ENCODE measurements at regions of chrX and their contacts with region 1.

Region 1: GRCh38 chrX:150772150-150772970 is 79.2 kb downstream of the MTMR1 start:
- DNase-seq: peak; percentile 36
- ATAC-seq: peak; percentile 96
- H3K4me3 ChIP-seq: no peak overlapping the region
- H3K27ac ChIP-seq: no peak overlapping the region
- H3K4me1 ChIP-seq: no peaks in the 10 kb centered on the region
- H3K27me3 ChIP-seq: no peaks in the 10 kb centered on the region
- CTCF ChIP-seq: peak; percentile 95
- EP300 ChIP-seq: no peak
- POLR2A ChIP-seq: no peak
- RAD21 ChIP-seq: peak; percentile 89

Region 2: DNA sequence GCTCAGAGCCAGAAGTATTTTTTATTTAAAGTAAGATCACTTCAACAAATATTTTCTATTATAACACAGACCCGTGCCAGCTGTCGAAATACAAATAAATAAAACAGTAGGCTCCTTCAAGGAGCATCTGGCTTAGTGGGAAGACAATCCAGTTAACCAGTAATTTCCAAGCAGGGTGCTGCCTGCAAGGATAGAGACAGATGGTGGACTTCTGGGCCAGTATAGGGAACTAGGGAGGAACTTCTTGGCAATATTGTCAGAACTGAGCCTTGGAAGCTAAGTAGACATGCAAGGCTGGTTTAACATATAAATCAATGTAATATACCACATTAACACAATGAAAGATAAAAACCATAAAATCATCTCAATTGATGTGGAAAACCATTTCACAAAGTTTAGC is 96.1 kb before region 1 on chrX:
- CTCF ChIA-PET with region 1: no interaction called
- POLR2A ChIA-PET with region 1: no interaction called
- in situ Hi-C with region 1: no loop called
- intact Hi-C with region 1: no loop called
- DNase-seq: no peak
- ATAC-seq: no peak
- H3K4me3 ChIP-seq: no peak overlapping the region
- H3K27ac ChIP-seq: no peak overlapping the region
- H3K4me1 ChIP-seq: no peaks in the 10 kb centered on the region
- H3K27me3 ChIP-seq: no peaks in the 10 kb centered on the region
- CTCF ChIP-seq: no peak
- EP300 ChIP-seq: no peak
- POLR2A ChIP-seq: no peak
- RAD21 ChIP-seq: no peak

Region 3: DNA sequence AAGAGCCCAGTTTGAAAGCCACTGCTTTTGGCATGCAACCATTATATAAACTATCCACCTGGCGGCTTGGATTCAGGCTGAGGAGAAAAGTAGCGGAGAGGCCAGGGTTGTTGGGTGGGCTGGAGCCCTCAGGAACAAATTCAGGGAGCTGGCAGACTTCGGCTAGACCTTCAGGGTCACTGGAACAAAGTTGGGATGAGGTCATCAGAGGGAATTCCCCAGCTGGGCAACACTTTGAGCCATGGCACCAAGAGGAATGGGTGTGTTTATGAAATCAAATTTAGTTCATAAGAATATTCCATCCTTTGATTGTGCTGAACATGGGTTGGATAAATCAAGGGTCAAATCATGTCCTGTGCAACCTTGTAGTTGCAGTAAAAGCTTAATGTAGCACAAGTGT is 57.2 kb before region 1 on chrX:
- CTCF ChIA-PET with region 1: no interaction called
- POLR2A ChIA-PET with region 1: no interaction called
- in situ Hi-C with region 1: no loop called
- intact Hi-C with region 1: no loop called
- DNase-seq: no peak
- ATAC-seq: no peak
- H3K4me3 ChIP-seq: no peak overlapping the region
- H3K27ac ChIP-seq: no peak overlapping the region
- H3K4me1 ChIP-seq: no peaks in the 10 kb centered on the region
- H3K27me3 ChIP-seq: no peaks in the 10 kb centered on the region
- CTCF ChIP-seq: no peak
- EP300 ChIP-seq: no peak
- POLR2A ChIP-seq: no peak
- RAD21 ChIP-seq: no peak

Region 4: GRCh38 chrX:150887906-150888465 is 115.6 kb after region 1 on chrX:
- CTCF ChIA-PET with region 1: no interaction called
- POLR2A ChIA-PET with region 1: no interaction called
- in situ Hi-C with region 1: no loop called
- intact Hi-C with region 1: no loop called
- DNase-seq: no peak
- ATAC-seq: no peak
- H3K4me3 ChIP-seq: no peak overlapping the region
- H3K27ac ChIP-seq: no peak overlapping the region
- H3K4me1 ChIP-seq: no peaks in the 10 kb centered on the region
- H3K27me3 ChIP-seq: no peaks in the 10 kb centered on the region
- CTCF ChIP-seq: no peak
- EP300 ChIP-seq: no peak
- POLR2A ChIP-seq: no peak
- RAD21 ChIP-seq: no peak

Region 5: DNA sequence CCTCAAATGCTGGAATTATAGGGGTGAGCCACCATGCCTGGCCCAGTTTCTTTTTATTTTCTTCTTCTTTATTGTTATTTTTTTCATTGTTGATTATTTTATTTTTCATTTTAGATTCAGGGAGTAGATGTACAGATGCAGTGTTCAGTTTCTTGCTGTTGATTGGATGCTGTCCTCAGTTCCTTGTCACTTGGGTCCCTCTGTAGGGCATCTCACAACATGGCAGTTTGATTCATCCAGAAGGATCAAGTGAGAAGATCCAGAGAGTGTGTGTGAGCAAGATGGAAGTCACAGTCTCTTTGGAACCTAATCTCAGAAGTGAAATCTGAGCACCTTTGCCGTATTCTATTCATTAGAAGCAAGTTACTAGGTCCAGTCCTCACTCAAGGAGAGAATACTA is 231.7 kb after region 1 on chrX:
- CTCF ChIA-PET with region 1: interaction called, 4 read pairs
- POLR2A ChIA-PET with region 1: no interaction called
- in situ Hi-C with region 1: loop called (anchors 10 kb)
- intact Hi-C with region 1: loop called (anchors 5 kb)
- DNase-seq: peak; percentile 3
- ATAC-seq: peak; percentile 53; the same call in 2 of the 3 replicates
- H3K4me3 ChIP-seq: no peak overlapping the region
- H3K27ac ChIP-seq: no peak overlapping the region
- H3K4me1 ChIP-seq: no peaks in the 10 kb centered on the region
- H3K27me3 ChIP-seq: no peaks in the 10 kb centered on the region
- CTCF ChIP-seq: peak; percentile 43
- EP300 ChIP-seq: no peak
- POLR2A ChIP-seq: no peak
- RAD21 ChIP-seq: no peak

Region 6: DNA sequence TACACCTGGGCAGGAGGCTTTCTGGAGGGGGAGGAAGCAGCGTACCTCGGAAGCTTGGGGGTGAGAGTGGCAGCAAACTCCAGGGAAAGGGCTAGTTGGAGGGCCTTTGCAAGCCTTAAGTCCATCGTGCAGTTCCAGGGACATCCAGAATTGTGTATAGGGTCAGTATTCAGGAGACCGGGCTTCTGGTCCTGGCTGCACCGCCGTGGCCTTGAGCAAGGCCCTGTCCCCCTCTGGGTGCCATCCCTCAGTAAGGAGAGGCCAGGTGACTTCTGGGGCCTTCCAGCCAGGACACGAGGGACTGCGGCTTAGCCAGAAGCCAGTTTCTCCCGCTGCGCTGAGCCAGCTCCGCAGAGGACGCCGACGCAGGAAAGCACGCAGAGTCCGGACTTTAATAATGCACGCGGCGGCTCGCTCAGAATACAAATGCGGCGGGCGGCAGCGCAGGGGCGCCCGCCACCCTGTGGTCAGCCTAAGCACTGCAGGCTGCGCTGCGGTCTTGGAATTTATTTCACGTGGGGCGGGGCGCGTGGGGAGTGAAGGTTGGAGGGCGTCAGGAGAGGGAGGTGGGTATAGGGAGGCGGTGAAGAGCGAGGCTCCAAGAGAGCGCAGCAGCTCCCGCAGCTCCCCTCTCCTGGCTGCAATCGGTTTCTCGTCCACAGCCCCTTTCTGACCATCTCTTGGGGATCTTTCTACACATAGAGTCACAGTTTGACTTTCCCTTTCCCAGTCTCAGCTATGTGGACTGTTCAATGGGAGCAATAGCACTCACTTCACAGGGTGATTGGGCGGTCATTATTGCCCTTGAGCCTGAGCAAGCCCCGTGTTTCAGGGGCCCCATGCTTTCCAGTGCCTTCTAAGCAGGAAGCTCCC is 310.0 kb after region 1 on chrX:
- CTCF ChIA-PET with region 1: interaction called, 25 read pairs
- POLR2A ChIA-PET with region 1: interaction called, 4 read pairs
- in situ Hi-C with region 1: loop called (anchors 5 kb)
- intact Hi-C with region 1: loop called (anchors 1 kb)
- DNase-seq: peak; percentile 15
- ATAC-seq: peak; percentile 98
- H3K4me3 ChIP-seq: peak overlapping the region in 1 of 3 experiments; percentile 33; a peak in 1 of 6 replicates
- H3K27ac ChIP-seq: no peak overlapping the region
- H3K4me1 ChIP-seq: no peaks in the 10 kb centered on the region
- H3K27me3 ChIP-seq: 0 out of 5 replicates have a peak, but pooled peaks cover 0 to 7% of the 10 kb centered on the region in 2 experiments
- CTCF ChIP-seq: peak; percentile 83
- EP300 ChIP-seq: no peak
- POLR2A ChIP-seq: no peak
- RAD21 ChIP-seq: peak; percentile 82